Common myeloid progenitor, CD34-positive (primary cell): ENCODE measurements at regions of chr3 and their contacts with region 1.

Region 1: DNA sequence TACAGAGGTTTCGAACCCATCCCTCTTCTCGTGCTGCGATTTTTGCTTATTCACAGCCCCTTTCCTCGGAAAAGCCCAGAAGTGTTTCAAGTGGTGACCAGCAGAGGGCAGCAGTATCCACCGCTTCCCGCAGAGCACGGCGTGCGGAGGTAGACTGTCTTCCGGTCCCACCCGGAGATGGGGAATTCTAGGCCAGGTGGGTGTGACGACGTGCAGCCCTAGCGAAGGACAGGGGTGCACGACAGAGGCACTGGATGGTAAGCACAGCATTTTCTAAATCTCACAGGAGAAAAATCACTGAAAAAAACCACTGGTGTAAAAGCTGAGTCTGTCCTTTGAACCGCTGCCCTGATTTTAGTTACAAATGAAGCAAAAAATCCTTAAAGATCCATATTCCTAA is 7.4 kb upstream of the PSMD6 start:
- DNase-seq: peak; percentile 69 to 74 (median 69)
- H3K4me3 ChIP-seq: peak overlapping the region in 6 of 7 experiments; percentile 13 to 68 (median 40)
- H3K27ac ChIP-seq: no peak overlapping the region
- H3K4me1 ChIP-seq: peaks cover 0 to 4% (median 3%) of the 10 kb centered on the region in 4 experiments
- H3K27me3 ChIP-seq: peaks cover 10 to 37% (median 21%) of the 10 kb centered on the region in 5 experiments

Region 2: DNA sequence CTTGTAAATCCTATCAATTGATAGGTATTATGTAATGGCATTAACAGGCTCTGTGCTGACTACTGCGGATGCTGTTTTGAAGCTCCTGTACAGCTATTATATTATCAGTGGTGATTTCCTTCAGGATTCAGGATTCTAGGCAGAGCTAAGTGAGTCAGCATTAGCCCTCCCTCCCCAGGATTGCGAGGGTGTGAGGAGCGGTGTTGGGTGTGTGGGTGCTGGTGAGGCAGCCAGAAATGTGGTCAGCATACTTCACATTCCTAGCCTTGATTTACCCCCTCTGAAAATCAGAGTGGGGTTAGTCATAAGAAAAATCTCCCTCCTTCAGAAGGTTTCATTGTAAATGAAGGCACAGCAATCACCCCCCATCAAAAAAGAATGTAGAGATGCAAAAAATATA is 305.8 kb before region 1 on chr3:
- CTCF ChIA-PET with region 1: no interaction called
- POLR2A ChIA-PET with region 1: no interaction called
- DNase-seq: no peak
- H3K4me3 ChIP-seq: no peak overlapping the region
- H3K27ac ChIP-seq: no peak overlapping the region
- H3K4me1 ChIP-seq: no peaks in the 10 kb centered on the region
- H3K27me3 ChIP-seq: no peaks in the 10 kb centered on the region

Region 3: GRCh38 chr3:64399205-64399800 is 368.6 kb after region 1 on chr3:
- CTCF ChIA-PET with region 1: interaction called, 15 read pairs
- POLR2A ChIA-PET with region 1: no interaction called
- DNase-seq: peak; percentile 43 to 60 (median 53)
- H3K4me3 ChIP-seq: no peak overlapping the region
- H3K27ac ChIP-seq: no peak overlapping the region
- H3K4me1 ChIP-seq: no peaks in the 10 kb centered on the region
- H3K27me3 ChIP-seq: peaks cover 0 to 2% (median 0%) of the 10 kb centered on the region in 5 experiments

Region 4: GRCh38 chr3:64484289-64484992 is 453.7 kb after region 1 on chr3:
- CTCF ChIA-PET with region 1: interaction called, 43 read pairs
- POLR2A ChIA-PET with region 1: no interaction called
- DNase-seq: peak; percentile 57 to 77 (median 70)
- H3K4me3 ChIP-seq: no peak overlapping the region
- H3K27ac ChIP-seq: no peak overlapping the region
- H3K4me1 ChIP-seq: no peaks in the 10 kb centered on the region
- H3K27me3 ChIP-seq: peaks cover 4 to 53% (median 18%) of the 10 kb centered on the region in 5 experiments